ENCODE measurements at regions of chr11 and their contacts with region 1.

Region 1: DNA sequence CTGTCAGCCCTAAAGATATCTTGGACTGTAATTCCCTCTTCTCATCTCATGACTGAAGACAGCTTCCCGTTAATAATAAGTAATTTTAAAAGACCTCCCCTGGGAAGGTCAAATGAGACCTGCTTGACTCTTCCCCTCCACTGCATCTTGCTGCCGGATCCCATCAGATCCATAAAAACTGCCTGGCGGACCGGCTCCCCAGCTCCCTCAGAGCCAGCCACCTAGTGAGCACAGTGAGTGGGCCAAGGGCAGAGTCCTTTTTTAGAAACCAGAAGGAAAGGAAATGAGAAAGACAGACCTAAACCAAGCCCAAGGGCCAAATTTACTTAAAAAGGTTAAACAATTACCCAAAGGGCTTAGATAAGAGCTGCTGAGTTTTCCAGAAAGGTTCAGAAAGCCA is 595.3 kb downstream of the OPCML start:
- DNase-seq: no peak
- H3K4me3 ChIP-seq: no peak overlapping the region
- H3K27ac ChIP-seq: no peak overlapping the region
- H3K4me1 ChIP-seq: no peaks in the 10 kb centered on the region
- H3K27me3 ChIP-seq: no peaks in the 10 kb centered on the region
- CTCF ChIP-seq: no peak
- POLR2A ChIP-seq: no peak

Region 2: GRCh38 chr11:132278801-132279574 is 658.0 kb before region 1 on chr11:
- intact Hi-C with region 1: loop called (anchors 5 kb)
- DNase-seq: peak; percentile 16 to 30
- H3K4me3 ChIP-seq: no peak overlapping the region
- H3K27ac ChIP-seq: no peak overlapping the region
- H3K4me1 ChIP-seq: no peaks in the 10 kb centered on the region
- H3K27me3 ChIP-seq: no peaks in the 10 kb centered on the region
- CTCF ChIP-seq: peak in 4 of 6 experiments; percentile 24 to 65 (median 62)
- POLR2A ChIP-seq: no peak

Measured in thyroid gland (tissue), 4 donors.